Ascending aorta (tissue), 2 donors: ENCODE measurements at regions of chr1 and their contacts with region 1.

Region 1: GRCh38 chr1:15526490-15527339 is at the start of gene DNAJC16:
- DNase-seq: peak; percentile 98 to 100
- H3K4me3 ChIP-seq: peak within 1 kb of the TSS; percentile 94 to 98
- H3K27ac ChIP-seq: peak within 1 kb of the TSS; percentile 93 to 94
- H3K4me1 ChIP-seq: peaks cover 7 to 25% of the 10 kb centered on the region in 2 donors
- H3K27me3 ChIP-seq: no peaks in the 10 kb centered on the region
- CTCF ChIP-seq: peak in 2 of 3 experiments; percentile 19 to 29
- total RNA-seq, gene DNAJC16: 11.4 TPM

Region 2: GRCh38 chr1:15337656-15338402 is 188.9 kb before region 1 on chr1:
- intact Hi-C with region 1: loop called (anchors 5 kb)
- DNase-seq: peak; percentile 48 to 82
- H3K4me3 ChIP-seq: peak overlapping the region in 1 of 2 donors; percentile 20
- H3K27ac ChIP-seq: peak overlapping the region; percentile 46 to 54
- H3K4me1 ChIP-seq: peaks cover 2 to 22% of the 10 kb centered on the region in 2 donors
- H3K27me3 ChIP-seq: no peaks in the 10 kb centered on the region
- CTCF ChIP-seq: no peak

Region 3: DNA sequence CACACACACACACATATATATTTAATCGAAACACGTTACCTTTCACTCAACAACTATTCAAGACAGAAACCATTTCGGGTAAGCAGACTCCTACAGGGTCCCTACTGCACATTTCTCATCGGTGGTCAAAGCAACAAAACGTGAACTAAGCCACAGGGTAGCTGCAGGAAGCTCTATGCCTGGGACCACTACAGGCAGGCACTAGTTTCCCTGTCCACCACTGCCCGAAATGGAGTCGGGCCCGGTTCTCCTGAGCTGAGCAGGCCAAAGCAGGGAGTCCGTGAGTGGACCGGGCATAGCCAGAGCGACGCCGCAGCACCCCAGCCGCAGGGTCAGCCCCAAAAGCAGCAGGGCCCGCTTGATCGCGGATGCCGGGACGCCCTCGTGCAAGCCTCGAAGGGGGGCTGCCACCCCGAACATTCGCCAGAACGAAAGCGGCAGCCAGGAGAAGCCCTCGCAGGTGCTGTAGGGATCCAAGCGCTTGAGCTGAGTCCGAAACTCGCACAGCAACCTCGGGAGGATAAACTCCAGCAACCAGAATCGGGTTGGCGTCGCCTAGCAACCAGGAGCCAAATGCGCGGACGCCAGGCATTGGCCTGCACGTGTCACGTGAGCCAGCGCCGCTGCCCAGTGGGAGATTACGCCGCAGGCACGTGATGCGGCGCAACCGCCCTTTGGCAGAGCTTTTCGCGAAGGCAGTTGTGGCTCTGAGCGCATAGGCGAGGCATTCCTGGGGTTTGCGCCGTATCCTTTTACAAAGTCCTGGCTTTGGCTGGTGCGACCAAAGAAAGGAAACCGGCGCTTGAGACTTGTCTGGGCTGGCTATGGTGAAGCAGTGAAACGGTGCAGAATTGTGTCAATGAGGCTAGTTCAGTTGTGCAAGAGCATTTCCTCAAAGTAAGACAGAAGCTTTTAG is 76.6 kb after region 1 on chr1:
- intact Hi-C with region 1: loop called (anchors 2 kb)
- DNase-seq: peak; percentile 92 to 98
- H3K4me3 ChIP-seq: peak overlapping the region; percentile 85 to 89
- H3K27ac ChIP-seq: peak overlapping the region; percentile 69 to 74
- H3K4me1 ChIP-seq: peaks cover 0 to 4% of the 10 kb centered on the region in 2 donors
- H3K27me3 ChIP-seq: no peaks in the 10 kb centered on the region
- CTCF ChIP-seq: no peak

Region 4: DNA sequence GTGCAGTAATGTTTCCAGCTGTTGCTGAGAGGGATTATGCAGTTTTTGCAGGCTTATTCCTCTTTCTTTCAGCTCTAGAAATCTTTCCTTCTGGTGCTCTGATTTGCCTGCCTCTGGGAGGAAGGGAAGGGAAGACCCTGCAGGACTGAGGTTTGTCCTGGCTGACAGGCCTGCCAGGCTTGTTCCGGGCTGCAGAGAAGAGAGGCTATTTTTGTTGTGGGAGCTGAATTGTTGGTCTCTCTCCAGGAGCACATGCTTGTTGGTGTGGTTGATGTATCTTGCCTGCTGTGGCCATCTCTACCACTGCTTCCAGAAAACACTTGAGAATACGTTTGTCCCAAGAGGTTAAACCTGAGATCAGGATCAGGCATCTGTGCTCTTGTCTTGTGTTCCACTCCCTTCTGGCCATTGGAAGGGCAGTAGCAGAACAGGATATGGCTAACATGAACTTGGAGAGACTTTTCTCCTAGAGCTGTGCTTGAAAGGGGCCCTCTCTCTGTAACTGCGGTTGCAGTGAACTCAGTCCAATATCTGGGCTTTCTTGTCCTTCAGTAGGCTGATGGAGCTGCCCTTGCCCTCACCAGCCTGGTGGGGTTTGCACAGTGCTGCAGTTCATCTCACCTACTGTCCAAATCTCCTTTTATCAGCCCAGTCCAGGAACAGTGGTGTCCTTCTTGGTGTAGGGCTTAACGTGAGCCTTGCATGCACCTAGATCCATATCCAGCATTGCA is 187.9 kb after region 1 on chr1:
- intact Hi-C with region 1: no loop called
- DNase-seq: no peak
- H3K4me3 ChIP-seq: no peak overlapping the region
- H3K27ac ChIP-seq: peak overlapping the region; percentile 19 to 33
- H3K4me1 ChIP-seq: peaks cover 0 to 12% of the 10 kb centered on the region in 2 donors
- H3K27me3 ChIP-seq: no peaks in the 10 kb centered on the region
- CTCF ChIP-seq: no peak